Common myeloid progenitor, CD34-positive (primary cell): ENCODE measurements at regions of chr1 and their contacts with region 1.

Region 1: DNA sequence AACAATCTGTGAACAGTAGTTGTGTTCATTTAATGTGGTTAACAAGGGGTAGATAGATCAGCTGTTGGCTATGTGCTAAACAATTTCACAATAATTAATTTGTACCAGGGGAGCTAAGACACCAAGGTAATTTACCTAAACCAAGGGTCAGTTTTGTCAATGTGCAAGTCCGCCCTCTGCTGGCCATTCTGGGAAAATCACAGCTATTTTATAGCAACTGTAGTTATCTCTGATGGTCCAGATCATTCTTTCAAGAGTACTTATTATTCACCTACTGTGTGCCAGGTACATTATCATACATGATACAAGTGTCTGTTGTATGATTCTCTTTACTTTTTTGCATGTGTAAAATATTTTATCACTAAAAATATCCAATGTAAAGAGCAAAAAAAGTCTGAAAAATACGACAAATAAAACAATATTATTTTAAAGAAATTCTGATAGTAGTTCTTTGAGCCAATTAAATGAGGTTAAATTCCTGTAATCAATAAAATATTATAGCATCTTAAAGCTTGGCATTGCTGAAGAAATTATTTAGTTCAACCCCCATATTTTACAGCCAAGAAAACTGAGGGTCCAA is 312.3 kb upstream of the FAM78B start:
- DNase-seq: peak; percentile 33 to 55 (median 46)
- H3K4me3 ChIP-seq: no peak overlapping the region
- H3K27ac ChIP-seq: no peak overlapping the region
- H3K4me1 ChIP-seq: no peaks in the 10 kb centered on the region
- H3K27me3 ChIP-seq: peaks cover 0 to 3% (median 0%) of the 10 kb centered on the region in 5 experiments

Region 2: GRCh38 chr1:166489670-166490436 is 10.7 kb after region 1 on chr1:
- CTCF ChIA-PET with region 1: interaction called, 28 read pairs
- POLR2A ChIA-PET with region 1: no interaction called
- DNase-seq: peak; percentile 87 to 95 (median 93)
- H3K4me3 ChIP-seq: peak overlapping the region; percentile 37 to 85 (median 78)
- H3K27ac ChIP-seq: peak overlapping the region; percentile 79 to 95
- H3K4me1 ChIP-seq: peaks cover 7 to 25% (median 14%) of the 10 kb centered on the region in 4 experiments
- H3K27me3 ChIP-seq: no peaks in the 10 kb centered on the region